ENCODE measurements at regions of chr17 and their contacts with region 1.

Region 1: GRCh38 chr17:48024937-48025906 is 12.4 kb downstream of the COPZ2 start:
- DNase-seq: peak; percentile 98
- ATAC-seq: peak; percentile 62
- H3K4me3 Mint-ChIP-seq: peak overlapping the region; percentile 74
- H3K27ac Mint-ChIP-seq: no peak overlapping the region
- H3K4me1 Mint-ChIP-seq: peaks cover 25% of the 10 kb centered on the region
- H3K27me3 Mint-ChIP-seq: peaks cover 39% of the 10 kb centered on the region
- CTCF ChIP-seq: peak; percentile 71

Region 2: DNA sequence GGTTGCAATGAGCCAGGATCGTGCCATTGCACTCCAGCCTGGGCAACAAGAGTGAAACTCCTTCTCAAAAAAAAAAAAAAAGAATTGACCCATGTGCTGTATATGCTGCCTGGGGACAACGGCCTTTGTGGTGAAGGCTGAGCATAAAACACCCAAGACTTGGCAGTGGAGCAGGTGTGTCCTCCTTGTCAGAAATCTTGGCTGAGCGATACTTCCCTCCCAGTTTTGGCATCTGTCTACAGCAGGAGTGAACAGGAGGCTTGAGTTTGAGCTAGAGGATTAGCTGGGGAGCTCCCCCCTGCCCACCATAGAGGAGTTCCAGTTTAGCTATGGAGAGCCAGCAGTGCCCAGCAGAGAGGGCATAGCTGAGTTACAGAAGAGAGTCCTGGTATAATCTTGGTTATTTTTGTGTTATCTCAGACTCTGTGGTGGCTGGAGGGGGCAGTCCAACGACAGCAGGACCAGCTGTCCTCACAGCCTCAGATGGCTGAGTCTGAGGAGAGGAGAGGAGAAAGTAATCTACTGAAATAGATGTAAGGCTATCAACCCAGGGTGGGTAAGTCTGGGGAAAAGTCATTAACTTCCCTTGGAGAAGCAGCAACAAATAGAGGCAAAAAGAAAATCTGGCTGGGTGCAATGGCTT is 110.8 kb before region 1 on chr17:
- CTCF ChIA-PET with region 1: no interaction called
- POLR2A ChIA-PET with region 1: no interaction called
- DNase-seq: no peak
- ATAC-seq: no peak
- H3K4me3 Mint-ChIP-seq: no peak overlapping the region
- H3K27ac Mint-ChIP-seq: peak overlapping the region; percentile 36
- H3K4me1 Mint-ChIP-seq: no peaks in the 10 kb centered on the region
- H3K27me3 Mint-ChIP-seq: no peaks in the 10 kb centered on the region
- CTCF ChIP-seq: no peak

Region 3: GRCh38 chr17:47924785-47925676 is 100.2 kb before region 1 on chr17:
- CTCF ChIA-PET with region 1: no interaction called
- POLR2A ChIA-PET with region 1: no interaction called
- DNase-seq: no peak
- ATAC-seq: no peak
- H3K4me3 Mint-ChIP-seq: no peak overlapping the region
- H3K27ac Mint-ChIP-seq: no peak overlapping the region; the same call in 1 of the 2 replicates
- H3K4me1 Mint-ChIP-seq: no peaks in the 10 kb centered on the region
- H3K27me3 Mint-ChIP-seq: no peaks in the 10 kb centered on the region; the same call in 1 of the 2 replicates
- CTCF ChIP-seq: no peak

Region 4: DNA sequence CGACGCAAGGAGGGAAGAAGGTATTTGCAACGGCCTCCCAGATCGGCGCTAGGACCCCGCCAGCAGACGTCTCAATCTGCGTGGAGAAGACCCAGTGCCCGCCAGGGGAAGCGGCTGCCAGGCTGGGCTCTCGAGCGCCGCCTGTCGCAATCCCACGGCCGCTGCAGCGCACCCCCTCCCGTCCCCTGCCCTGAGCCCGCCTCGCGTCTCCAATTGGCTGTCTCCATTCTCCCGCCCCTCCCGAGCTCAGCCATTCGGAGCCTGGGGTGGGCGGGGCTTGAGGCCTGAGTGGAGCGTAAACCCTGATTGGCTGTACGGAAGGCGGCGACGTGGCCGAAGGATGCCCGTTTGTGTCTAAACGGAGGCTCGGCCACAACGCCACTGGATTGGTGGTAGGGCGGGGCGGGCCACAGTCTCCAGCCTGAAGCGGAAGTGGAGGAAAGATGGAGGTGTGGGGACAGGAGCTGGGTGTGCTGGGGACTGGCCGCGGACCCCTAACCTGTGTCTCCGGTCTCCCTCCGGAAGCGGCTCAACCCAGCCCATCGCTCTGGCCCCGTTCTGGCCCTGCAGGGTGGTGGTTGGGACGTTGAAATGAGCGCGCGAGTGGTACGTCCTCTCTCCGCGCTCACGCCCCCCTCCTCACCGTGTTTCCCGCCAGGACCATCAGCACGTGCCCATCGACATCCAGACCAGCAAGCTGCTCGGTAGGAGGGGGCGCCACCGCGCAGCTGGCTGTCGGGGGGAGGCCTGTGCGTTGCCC is 54.3 kb before region 1 on chr17 and contains the start of gene CDK5RAP3:
- CTCF ChIA-PET with region 1: interaction called, 242 read pairs
- POLR2A ChIA-PET with region 1: interaction called, 3 read pairs
- DNase-seq: peak; percentile 100
- ATAC-seq: peak; percentile 98
- H3K4me3 Mint-ChIP-seq: peak within 1 kb of the TSS; percentile 82
- H3K27ac Mint-ChIP-seq: peak within 1 kb of the TSS; percentile 94
- H3K4me1 Mint-ChIP-seq: peaks cover 14% of the 10 kb centered on the region
- H3K27me3 Mint-ChIP-seq: peaks cover 16% of the 10 kb centered on the region
- CTCF ChIP-seq: peak; percentile 74
- total RNA-seq, gene CDK5RAP3: 128 to 143 TPM (median 138 TPM) in 3 replicates

Region 5: GRCh38 chr17:48037036-48037837 is 12.0 kb after region 1 on chr17 and contains the start of gene COPZ2:
- CTCF ChIA-PET with region 1: interaction called, 108 read pairs
- POLR2A ChIA-PET with region 1: no interaction called
- DNase-seq: peak; percentile 55
- ATAC-seq: peak; percentile 65
- H3K4me3 Mint-ChIP-seq: peak within 1 kb of the TSS; percentile 79
- H3K27ac Mint-ChIP-seq: no peak within 1 kb of the TSS
- H3K4me1 Mint-ChIP-seq: peaks cover 6% of the 10 kb centered on the region
- H3K27me3 Mint-ChIP-seq: peaks cover 59% of the 10 kb centered on the region
- CTCF ChIP-seq: no peak
- total RNA-seq, gene COPZ2: 0.37 to 0.44 TPM in 2 of 3 replicates, not detected in the other

Region 6: DNA sequence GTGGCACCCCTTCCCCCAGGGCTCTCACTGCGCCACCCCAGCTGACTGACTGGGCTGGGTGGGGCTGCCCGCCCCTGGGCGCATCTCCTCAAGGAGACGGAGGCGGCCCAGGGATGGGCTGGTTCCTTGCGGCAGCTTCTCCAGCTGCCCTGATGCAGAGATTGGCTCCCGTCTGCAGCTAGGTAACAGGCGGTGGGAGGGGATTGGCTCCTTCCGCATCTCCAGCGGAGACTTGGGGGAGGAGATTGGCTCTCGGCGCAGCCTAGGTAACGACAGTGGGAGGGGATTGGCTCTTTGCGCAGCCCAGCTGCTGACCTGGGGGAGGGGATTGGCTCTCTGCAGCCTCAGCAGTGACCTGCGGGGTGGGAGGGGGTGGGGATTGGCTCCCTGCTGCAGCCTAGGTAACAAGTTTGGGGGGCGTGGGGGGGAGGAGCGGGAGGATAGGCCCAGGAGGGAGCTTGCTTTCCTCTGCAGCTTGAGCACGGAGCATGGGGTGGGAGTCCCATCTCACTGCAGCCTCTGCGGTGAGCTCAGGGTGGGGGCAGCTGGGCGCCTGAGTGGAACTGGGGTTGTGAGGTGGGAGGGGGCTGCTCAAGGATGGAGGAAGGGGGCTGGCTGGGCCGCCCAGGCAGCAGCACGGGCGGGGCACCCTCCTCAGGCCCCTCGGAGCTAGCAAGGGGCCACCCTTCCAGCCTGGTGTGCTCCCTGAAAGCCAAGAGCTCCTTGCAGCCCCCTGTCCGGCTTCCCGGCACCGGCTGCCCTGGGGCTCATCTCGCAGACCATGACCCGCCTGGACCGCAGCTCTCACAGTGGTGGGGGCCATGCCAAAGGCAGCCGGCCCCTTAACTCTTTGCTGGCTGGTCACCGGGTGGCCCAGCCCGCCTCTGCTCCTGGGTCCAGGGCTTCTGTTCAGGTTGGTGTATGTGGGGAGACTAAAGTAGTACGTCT is 29.3 kb after region 1 on chr17:
- CTCF ChIA-PET with region 1: interaction called, 108 read pairs
- POLR2A ChIA-PET with region 1: interaction called, 22 read pairs
- DNase-seq: peak; percentile 96
- ATAC-seq: peak; percentile 91
- H3K4me3 Mint-ChIP-seq: peak overlapping the region; percentile 85
- H3K27ac Mint-ChIP-seq: peak overlapping the region; percentile 99
- H3K4me1 Mint-ChIP-seq: peaks cover 73% of the 10 kb centered on the region
- H3K27me3 Mint-ChIP-seq: no peaks in the 10 kb centered on the region
- CTCF ChIP-seq: no peak

Region 7: GRCh38 chr17:48068491-48068961 is 43.3 kb after region 1 on chr17:
- CTCF ChIA-PET with region 1: interaction called, 66 read pairs
- POLR2A ChIA-PET with region 1: interaction called, 4 read pairs
- DNase-seq: peak; percentile 57
- ATAC-seq: peak; percentile 94
- H3K4me3 Mint-ChIP-seq: no peak overlapping the region
- H3K27ac Mint-ChIP-seq: peak overlapping the region; percentile 64
- H3K4me1 Mint-ChIP-seq: peaks cover 6% of the 10 kb centered on the region
- H3K27me3 Mint-ChIP-seq: no peaks in the 10 kb centered on the region
- CTCF ChIP-seq: no peak

Region 8: GRCh38 chr17:48101012-48101720 is 75.9 kb after region 1 on chr17 and contains the start of gene CBX1:
- CTCF ChIA-PET with region 1: interaction called, 19 read pairs
- POLR2A ChIA-PET with region 1: no interaction called
- DNase-seq: peak; percentile 97
- ATAC-seq: peak; percentile 90
- H3K4me3 Mint-ChIP-seq: peak within 1 kb of the TSS; percentile 87
- H3K27ac Mint-ChIP-seq: peak within 1 kb of the TSS; percentile 97
- H3K4me1 Mint-ChIP-seq: peaks cover 11% of the 10 kb centered on the region
- H3K27me3 Mint-ChIP-seq: peaks cover 5% of the 10 kb centered on the region; the same call in 1 of the 2 replicates
- CTCF ChIP-seq: no peak
- total RNA-seq, gene CBX1: 162 to 167 TPM (median 165 TPM) in 3 replicates

Region 9: DNA sequence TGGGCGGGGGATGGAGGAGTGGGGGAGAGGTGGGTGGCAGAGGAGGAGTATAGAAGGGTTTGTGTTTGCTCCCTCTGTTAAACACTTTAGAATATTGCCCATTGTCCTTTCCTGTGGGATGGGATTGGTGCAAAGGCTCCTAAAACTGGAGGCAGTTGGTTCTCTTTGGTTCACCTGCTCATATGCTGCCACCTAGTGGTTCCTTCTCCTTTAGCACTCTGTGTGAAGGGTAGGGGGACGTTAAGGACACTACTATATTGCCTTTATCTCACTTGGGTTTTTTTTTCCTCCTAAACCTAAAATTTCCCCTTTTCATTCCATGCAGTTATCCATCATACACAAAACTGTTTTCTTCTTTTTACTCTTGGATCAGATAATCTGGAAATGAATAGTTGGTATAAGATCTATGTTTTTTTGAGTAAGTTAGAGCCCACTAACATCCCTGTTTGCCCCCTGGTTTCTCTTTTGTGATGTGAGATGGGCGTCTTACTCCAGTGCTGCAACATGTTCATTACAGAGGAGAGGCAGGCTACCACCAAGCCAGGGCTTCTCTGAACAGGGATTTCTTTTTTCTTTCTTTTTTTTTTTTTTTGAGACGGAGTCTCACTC is 106.1 kb after region 1 on chr17:
- CTCF ChIA-PET with region 1: interaction called, 67 read pairs
- POLR2A ChIA-PET with region 1: no interaction called
- DNase-seq: peak; percentile 77
- ATAC-seq: peak; percentile 97
- H3K4me3 Mint-ChIP-seq: no peak overlapping the region
- H3K27ac Mint-ChIP-seq: peak overlapping the region; percentile 25; the same call in 1 of the 2 replicates
- H3K4me1 Mint-ChIP-seq: peaks cover 9% of the 10 kb centered on the region
- H3K27me3 Mint-ChIP-seq: no peaks in the 10 kb centered on the region; the same call in 1 of the 2 replicates
- CTCF ChIP-seq: peak; percentile 58

Region 10: GRCh38 chr17:48413613-48414405 is 388.6 kb after region 1 on chr17:
- CTCF ChIA-PET with region 1: no interaction called
- POLR2A ChIA-PET with region 1: no interaction called
- DNase-seq: no peak
- ATAC-seq: no peak
- H3K4me3 Mint-ChIP-seq: no peak overlapping the region
- H3K27ac Mint-ChIP-seq: no peak overlapping the region
- H3K4me1 Mint-ChIP-seq: peaks cover 15% of the 10 kb centered on the region
- H3K27me3 Mint-ChIP-seq: peaks cover 3% of the 10 kb centered on the region; the same call in 1 of the 2 replicates
- CTCF ChIP-seq: no peak